Activated CD8-positive, alpha-beta T cell treated with anti-CD3 and anti-CD28 coated beads for 36 hours (primary cell): ENCODE measurements at regions of chr15 and their contacts with region 1.

Region 1: GRCh38 chr15:70722266-70723121 is 40.9 kb downstream of the UACA start:
- DNase-seq: no peak
- ATAC-seq: no peak
- H3K4me3 Mint-ChIP-seq: no peak overlapping the region
- H3K27ac Mint-ChIP-seq: no peak overlapping the region
- H3K4me1 Mint-ChIP-seq: no peaks in the 10 kb centered on the region
- H3K27me3 Mint-ChIP-seq: peaks cover 6% of the 10 kb centered on the region
- CTCF ChIP-seq: peak; percentile 83

Region 2: DNA sequence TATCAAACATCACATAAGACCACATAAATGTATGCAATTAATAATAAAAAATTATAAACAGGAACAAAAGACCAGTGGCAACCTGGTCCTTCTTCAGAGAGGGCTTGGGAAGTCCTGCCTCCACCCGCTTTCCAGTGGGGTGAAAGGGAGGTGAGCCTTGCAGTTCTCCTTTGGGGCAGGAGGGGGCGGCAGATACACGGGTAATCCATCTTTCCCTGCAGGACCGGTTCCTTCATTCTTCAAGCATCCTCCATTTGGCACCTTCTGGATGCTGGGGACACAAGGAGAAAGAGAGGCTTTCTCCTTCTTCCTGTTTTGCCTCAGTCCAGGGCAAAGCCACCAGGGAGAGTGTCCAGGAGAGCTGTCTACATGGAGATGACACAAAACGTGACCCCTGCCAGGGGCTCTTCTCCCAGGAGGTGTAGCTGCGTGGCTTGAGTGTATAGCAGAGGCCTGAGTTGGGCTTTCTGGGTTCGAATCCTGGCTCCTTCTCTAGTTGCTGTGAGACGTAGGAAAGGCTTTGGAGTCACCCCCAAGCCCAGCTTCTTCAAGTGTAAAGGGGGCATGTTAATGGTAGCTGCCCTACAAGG is 1246.6 kb before region 1 on chr15:
- CTCF ChIA-PET with region 1: interaction called, 14 read pairs
- POLR2A ChIA-PET with region 1: no interaction called
- intact Hi-C with region 1: no loop called
- DNase-seq: peak; percentile 81
- ATAC-seq: peak; percentile 89
- H3K4me3 Mint-ChIP-seq: no peak overlapping the region
- H3K27ac Mint-ChIP-seq: no peak overlapping the region
- H3K4me1 Mint-ChIP-seq: peaks cover 2% of the 10 kb centered on the region
- H3K27me3 Mint-ChIP-seq: peaks cover 9% of the 10 kb centered on the region
- CTCF ChIP-seq: peak; percentile 95

Region 3: DNA sequence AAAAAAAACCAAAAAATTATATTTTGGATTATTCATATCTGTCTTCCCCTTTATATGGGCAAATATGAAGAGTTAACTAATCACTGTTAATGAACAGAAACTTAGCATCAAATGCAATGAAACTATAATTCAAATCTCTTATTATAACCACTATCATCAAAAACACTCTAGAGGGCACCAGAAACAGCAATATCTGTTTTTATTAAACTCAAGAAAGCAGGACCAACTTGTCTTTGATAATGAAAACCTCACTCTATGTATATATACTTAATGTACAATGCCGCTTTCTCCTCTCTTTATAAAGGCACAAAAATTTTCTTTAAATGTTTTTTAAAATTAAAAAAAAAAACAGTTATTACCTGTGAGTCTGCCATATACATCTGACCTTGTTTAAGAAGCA is 51.8 kb before region 1 on chr15:
- CTCF ChIA-PET with region 1: interaction called, 18 read pairs
- POLR2A ChIA-PET with region 1: no interaction called
- intact Hi-C with region 1: loop called (anchors 10 kb)
- DNase-seq: no peak
- ATAC-seq: no peak
- H3K4me3 Mint-ChIP-seq: no peak overlapping the region
- H3K27ac Mint-ChIP-seq: no peak overlapping the region
- H3K4me1 Mint-ChIP-seq: peaks cover 15% of the 10 kb centered on the region
- H3K27me3 Mint-ChIP-seq: peaks cover 6% of the 10 kb centered on the region
- CTCF ChIP-seq: peak; percentile 57

Region 4: GRCh38 chr15:70679919-70680231 is 42.6 kb before region 1 on chr15:
- CTCF ChIA-PET with region 1: interaction called, 36 read pairs
- POLR2A ChIA-PET with region 1: no interaction called
- intact Hi-C with region 1: loop called (anchors 10 kb)
- DNase-seq: no peak
- ATAC-seq: no peak
- H3K4me3 Mint-ChIP-seq: no peak overlapping the region
- H3K27ac Mint-ChIP-seq: no peak overlapping the region
- H3K4me1 Mint-ChIP-seq: no peaks in the 10 kb centered on the region
- H3K27me3 Mint-ChIP-seq: peaks cover 6% of the 10 kb centered on the region
- CTCF ChIP-seq: peak; percentile 35

Region 5: GRCh38 chr15:70703096-70703878 is 19.2 kb before region 1 on chr15:
- CTCF ChIA-PET with region 1: interaction called, 10 read pairs
- POLR2A ChIA-PET with region 1: no interaction called
- intact Hi-C with region 1: no loop called
- DNase-seq: no peak
- ATAC-seq: no peak
- H3K4me3 Mint-ChIP-seq: no peak overlapping the region
- H3K27ac Mint-ChIP-seq: no peak overlapping the region
- H3K4me1 Mint-ChIP-seq: no peaks in the 10 kb centered on the region
- H3K27me3 Mint-ChIP-seq: peaks cover 12% of the 10 kb centered on the region
- CTCF ChIP-seq: no peak

Region 6: DNA sequence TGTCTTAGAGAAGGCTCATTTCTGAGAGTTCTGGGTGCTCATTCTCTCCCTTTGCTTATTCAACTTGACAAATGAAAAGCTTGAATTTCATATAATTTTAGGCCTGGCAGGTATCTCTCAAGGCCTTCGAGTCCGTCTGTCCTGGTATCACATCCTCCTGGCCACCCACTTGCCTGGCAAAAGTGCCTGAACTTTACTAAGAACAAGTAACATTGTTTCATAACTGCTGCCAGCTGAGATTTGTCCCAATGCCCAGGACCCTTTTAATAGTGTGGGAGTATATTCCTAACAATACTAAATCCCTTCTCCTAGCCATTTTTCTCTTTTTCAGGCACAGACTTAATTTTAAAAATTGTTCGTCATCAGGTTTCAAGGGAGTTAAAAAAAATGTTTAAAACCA is 113.3 kb after region 1 on chr15:
- CTCF ChIA-PET with region 1: no interaction called
- POLR2A ChIA-PET with region 1: no interaction called
- intact Hi-C with region 1: no loop called
- DNase-seq: no peak
- ATAC-seq: no peak
- H3K4me3 Mint-ChIP-seq: no peak overlapping the region
- H3K27ac Mint-ChIP-seq: no peak overlapping the region
- H3K4me1 Mint-ChIP-seq: no peaks in the 10 kb centered on the region
- H3K27me3 Mint-ChIP-seq: peaks cover 3% of the 10 kb centered on the region
- CTCF ChIP-seq: no peak

Region 7: GRCh38 chr15:71136159-71136783 is 413.8 kb after region 1 on chr15:
- CTCF ChIA-PET with region 1: no interaction called
- POLR2A ChIA-PET with region 1: no interaction called
- intact Hi-C with region 1: no loop called
- DNase-seq: no peak
- ATAC-seq: no peak
- H3K4me3 Mint-ChIP-seq: no peak overlapping the region
- H3K27ac Mint-ChIP-seq: no peak overlapping the region
- H3K4me1 Mint-ChIP-seq: no peaks in the 10 kb centered on the region
- H3K27me3 Mint-ChIP-seq: peaks cover 16% of the 10 kb centered on the region
- CTCF ChIP-seq: no peak